ENCODE measurements at regions of chr7 and their contacts with region 1.

Region 1: DNA sequence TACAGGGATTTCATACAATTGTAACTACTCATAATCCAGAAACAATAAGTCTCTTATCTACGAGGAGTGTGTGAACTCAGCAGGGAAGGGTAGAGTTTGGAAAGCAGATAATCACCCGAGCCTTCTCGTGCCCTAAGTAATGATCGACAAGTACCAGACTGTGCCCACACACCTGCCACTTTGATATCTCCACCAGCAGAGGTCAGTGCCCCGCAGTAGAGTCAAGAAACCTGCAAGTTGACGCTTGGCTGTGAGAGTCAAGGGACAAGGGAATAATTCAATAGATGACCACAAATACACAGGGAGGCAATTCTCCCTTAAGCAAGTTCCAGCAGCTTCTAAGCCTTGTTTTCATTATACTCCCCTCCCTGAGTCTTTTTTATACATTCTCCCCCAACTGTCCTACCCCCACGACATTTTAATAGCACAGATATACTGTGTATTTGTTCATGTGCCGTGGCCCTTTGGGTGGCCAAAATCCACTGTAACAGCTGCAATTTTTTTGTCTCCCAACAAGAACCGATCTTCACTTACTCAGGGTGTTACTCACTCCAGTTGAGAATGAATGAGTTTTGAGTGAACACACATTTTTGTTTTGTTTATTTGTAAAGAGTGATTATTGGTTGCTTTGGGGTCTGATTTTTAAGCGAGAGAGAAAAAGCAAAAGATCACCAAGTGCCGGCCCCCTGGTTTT is 106.9 kb upstream of the RHEB start:
- DNase-seq: peak in 1 of 2 experiments; percentile 48
- H3K4me3 ChIP-seq: no peak overlapping the region
- H3K27ac ChIP-seq: no peak overlapping the region
- H3K4me1 ChIP-seq: peaks cover 2 to 17% (median 11%) of the 10 kb centered on the region in 4 experiments
- H3K27me3 ChIP-seq: peaks cover 0 to 21% (median 13%) of the 10 kb centered on the region in 4 experiments; a peak in 3 of 7 replicates
- CTCF ChIP-seq: peak; percentile 76 to 89 (median 79)
- EP300 ChIP-seq: no peak
- POLR2A ChIP-seq: no peak
- RAD21 ChIP-seq: peak; percentile 80 to 87

Region 2: GRCh38 chr7:151611041-151611440 is 15.5 kb before region 1 on chr7:
- CTCF ChIA-PET with region 1: interaction called, 16 read pairs
- POLR2A ChIA-PET with region 1: interaction called, 3 read pairs
- DNase-seq: no peak
- H3K4me3 ChIP-seq: no peak overlapping the region
- H3K27ac ChIP-seq: no peak overlapping the region
- H3K4me1 ChIP-seq: no peaks in the 10 kb centered on the region
- H3K27me3 ChIP-seq: no peaks in the 10 kb centered on the region
- CTCF ChIP-seq: no peak
- EP300 ChIP-seq: no peak
- POLR2A ChIP-seq: no peak
- RAD21 ChIP-seq: no peak